Posterior cingulate gyrus (tissue), 11 donors: ENCODE measurements at regions of chr12 and their contacts with region 1.

Region 1: DNA sequence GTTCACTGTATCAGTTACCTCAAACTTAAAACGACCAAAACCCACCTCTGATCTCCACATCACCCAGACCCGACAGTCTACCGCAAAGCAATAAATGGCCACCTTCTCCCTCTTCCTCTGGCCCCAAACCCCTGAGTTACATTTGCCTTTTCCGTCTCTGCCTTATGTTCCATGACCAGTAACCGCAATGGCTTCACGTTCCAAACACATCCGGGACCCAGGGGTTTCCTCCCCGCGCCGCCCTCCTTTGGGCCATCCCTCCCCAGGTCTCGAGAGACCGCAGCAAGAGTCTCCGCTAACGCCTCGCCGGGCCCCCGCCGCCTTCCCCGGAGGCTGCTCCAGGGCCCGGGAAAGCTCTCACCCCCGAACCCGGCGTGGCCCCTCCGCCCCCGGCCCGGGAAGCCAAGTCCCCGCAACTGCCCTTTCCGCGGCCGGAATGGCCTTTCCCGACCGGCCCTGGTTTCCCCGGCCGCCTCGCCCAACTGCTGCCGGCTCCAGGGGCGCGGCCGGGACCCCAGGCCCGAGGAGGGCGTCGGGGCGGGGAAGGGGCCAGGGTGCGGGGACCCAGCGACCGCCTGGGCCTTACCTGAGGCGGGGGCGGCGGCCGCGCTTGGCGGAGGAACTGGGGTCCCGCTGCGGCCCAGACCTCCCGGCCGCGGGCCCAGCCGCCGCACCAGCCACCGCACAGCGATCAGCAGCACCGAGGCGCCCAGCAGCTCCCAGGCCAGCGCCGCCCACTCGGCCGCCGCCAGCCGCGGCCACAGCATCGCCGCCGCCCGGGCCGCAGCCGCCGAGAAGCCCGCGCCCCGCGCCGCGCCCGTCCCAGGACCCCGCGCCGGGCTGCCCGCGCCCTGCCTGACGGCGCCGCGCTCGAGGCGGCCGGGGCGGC is at the start of gene ANKLE2:
- DNase-seq: peak in 3 of 10 donors; percentile 10 to 91 (median 80)

Region 2: GRCh38 chr12:132327351-132328171 is 433.7 kb before region 1 on chr12:
- intact Hi-C with region 1: no loop called
- DNase-seq: peak in 8 of 10 donors; percentile 66 to 95 (median 78)

Region 3: GRCh38 chr12:132710422-132711168 is 50.7 kb before region 1 on chr12 and contains the start of gene PGAM5:
- intact Hi-C with region 1: loop called (anchors 10 kb)
- DNase-seq: peak; percentile 60 to 97 (median 78)